T-cell (primary cell): ENCODE measurements at regions of chr7 and their contacts with region 1.

Region 1: DNA sequence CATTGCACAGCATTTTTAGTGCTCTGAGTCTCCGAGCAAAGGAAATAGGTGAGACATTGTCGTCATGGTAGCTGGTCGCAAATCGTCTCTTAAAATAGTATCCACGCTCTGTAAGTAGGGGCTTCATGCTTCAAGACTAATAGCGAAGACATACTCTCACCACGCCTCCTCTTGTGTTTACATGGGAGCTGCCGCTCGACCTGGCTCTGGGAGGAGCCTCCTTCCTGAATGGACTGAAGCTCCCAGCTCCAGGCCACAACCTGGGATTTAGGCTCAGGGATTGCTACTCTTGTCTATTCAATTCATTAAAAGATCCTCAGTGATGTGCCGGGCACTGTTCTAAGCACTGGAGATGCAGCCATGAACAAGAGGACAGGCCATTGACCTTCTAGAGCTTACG is 196.1 kb upstream of the GALNT17 start:
- DNase-seq: no peak
- ATAC-seq: no peak
- H3K4me3 ChIP-seq: no peak overlapping the region
- H3K4me3 Mint-ChIP-seq: no peak overlapping the region
- H3K27ac ChIP-seq: no peak overlapping the region
- H3K27ac Mint-ChIP-seq: no peak overlapping the region
- H3K4me1 ChIP-seq: no peaks in the 10 kb centered on the region
- H3K4me1 Mint-ChIP-seq: no peaks in the 10 kb centered on the region
- H3K27me3 ChIP-seq: peaks cover 0 to 3% of the 10 kb centered on the region in 2 experiments
- H3K27me3 Mint-ChIP-seq: peaks cover 0 to 3% of the 10 kb centered on the region in 2 donors

Region 2: GRCh38 chr7:69104023-69104422 is 1831.8 kb before region 1 on chr7:
- CTCF ChIA-PET with region 1: no interaction called
- POLR2A ChIA-PET with region 1: interaction called in 1 of 2 experiments, 11 read pairs
- DNase-seq: no peak
- ATAC-seq: no peak
- H3K4me3 ChIP-seq: no peak overlapping the region
- H3K4me3 Mint-ChIP-seq: no peak overlapping the region
- H3K27ac ChIP-seq: no peak overlapping the region
- H3K27ac Mint-ChIP-seq: no peak overlapping the region
- H3K4me1 ChIP-seq: no peaks in the 10 kb centered on the region
- H3K4me1 Mint-ChIP-seq: no peaks in the 10 kb centered on the region
- H3K27me3 ChIP-seq: peaks cover 0 to 9% of the 10 kb centered on the region in 2 experiments
- H3K27me3 Mint-ChIP-seq: no peaks in the 10 kb centered on the region

Region 3: DNA sequence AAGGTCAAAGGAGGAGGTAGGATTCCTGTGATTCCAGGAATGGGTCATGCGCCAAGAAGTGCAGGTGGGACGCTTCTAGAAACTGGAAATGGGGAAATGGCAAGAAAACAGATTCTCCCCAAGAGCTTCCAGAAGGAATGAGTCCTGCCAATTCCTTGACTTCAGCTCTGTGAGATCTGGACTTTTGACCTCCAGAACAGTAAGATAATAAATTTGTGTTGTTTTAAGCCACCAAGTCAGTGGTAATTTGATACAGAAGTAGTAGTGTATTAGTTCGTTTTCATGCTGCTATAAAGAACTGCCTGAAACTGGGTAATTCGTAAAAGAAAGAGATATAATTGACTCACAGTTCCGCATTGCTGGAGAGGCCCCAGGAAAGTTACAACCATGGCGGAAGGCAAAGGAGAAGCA is 17.5 kb after region 1 on chr7:
- CTCF ChIA-PET with region 1: no interaction called
- POLR2A ChIA-PET with region 1: no interaction called
- DNase-seq: no peak
- ATAC-seq: no peak
- H3K4me3 ChIP-seq: no peak overlapping the region
- H3K4me3 Mint-ChIP-seq: no peak overlapping the region
- H3K27ac ChIP-seq: no peak overlapping the region
- H3K27ac Mint-ChIP-seq: no peak overlapping the region
- H3K4me1 ChIP-seq: no peaks in the 10 kb centered on the region
- H3K4me1 Mint-ChIP-seq: no peaks in the 10 kb centered on the region
- H3K27me3 ChIP-seq: no peaks in the 10 kb centered on the region
- H3K27me3 Mint-ChIP-seq: no peaks in the 10 kb centered on the region